Endothelial cell of umbilical vein (primary cell): ENCODE measurements at regions of chr2 and their contacts with region 1.

Region 1: DNA sequence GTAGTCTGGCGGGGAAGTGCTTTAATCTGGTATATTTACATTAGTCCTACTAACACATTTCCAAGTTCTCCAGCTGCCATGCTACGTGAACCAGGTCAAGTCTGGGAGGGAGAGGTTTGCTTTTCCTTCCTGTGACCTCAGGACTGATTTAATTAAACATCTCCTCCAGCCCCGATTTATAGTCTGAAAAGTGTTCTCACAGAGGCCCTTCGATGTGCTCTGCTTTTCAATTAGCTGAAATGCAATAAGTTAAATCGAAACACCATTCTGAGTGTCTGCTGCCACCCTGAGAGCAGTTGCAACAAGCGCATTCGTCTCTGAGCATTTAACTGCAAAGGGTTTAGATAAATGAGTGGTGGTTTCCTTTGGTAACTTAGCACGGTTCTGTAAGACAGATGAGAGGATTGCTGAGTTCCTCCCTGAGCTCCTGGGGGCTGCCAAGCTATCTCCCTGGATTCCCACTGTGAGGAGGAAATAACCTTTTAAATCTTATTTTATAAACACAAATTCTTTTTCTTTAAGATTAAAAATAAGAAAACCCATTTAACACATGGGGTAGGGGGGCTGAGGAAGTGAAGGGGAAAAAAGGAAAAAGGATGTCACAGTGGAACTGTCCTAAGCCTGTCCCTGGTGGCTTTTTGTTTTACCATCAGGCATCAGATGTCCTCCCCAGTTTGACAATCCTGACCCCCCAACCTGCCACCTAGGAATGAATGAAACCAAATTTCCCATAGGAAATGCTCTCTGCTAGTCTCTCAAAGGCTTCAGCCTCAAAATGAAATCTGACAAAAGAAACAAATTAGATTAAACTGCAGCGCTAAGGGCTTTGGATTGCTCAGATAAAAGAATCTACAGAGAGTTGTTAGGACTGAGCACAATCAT is 56.5 kb upstream of the CREB1 start:
- DNase-seq: peak; percentile 90
- H3K4me3 ChIP-seq: peak overlapping the region in 1 of 3 experiments; percentile 40
- H3K27ac ChIP-seq: peak overlapping the region; percentile 58
- H3K4me1 ChIP-seq: peaks cover 9% of the 10 kb centered on the region
- H3K27me3 ChIP-seq: no peaks in the 10 kb centered on the region
- CTCF ChIP-seq: peak; percentile 72 to 81
- POLR2A ChIP-seq: no peak

Region 2: GRCh38 chr2:206556357-206556949 is 916.8 kb before region 1 on chr2:
- CTCF ChIA-PET with region 1: no interaction called
- POLR2A ChIA-PET with region 1: no interaction called
- dilution Hi-C with region 1: no loop called
- intact Hi-C with region 1: loop called (anchors 10 kb)
- DNase-seq: peak; percentile 72
- H3K4me3 ChIP-seq: no peak overlapping the region
- H3K27ac ChIP-seq: no peak overlapping the region
- H3K4me1 ChIP-seq: no peaks in the 10 kb centered on the region
- H3K27me3 ChIP-seq: no peaks in the 10 kb centered on the region
- CTCF ChIP-seq: peak; percentile 30 to 39
- POLR2A ChIP-seq: no peak

Region 3: DNA sequence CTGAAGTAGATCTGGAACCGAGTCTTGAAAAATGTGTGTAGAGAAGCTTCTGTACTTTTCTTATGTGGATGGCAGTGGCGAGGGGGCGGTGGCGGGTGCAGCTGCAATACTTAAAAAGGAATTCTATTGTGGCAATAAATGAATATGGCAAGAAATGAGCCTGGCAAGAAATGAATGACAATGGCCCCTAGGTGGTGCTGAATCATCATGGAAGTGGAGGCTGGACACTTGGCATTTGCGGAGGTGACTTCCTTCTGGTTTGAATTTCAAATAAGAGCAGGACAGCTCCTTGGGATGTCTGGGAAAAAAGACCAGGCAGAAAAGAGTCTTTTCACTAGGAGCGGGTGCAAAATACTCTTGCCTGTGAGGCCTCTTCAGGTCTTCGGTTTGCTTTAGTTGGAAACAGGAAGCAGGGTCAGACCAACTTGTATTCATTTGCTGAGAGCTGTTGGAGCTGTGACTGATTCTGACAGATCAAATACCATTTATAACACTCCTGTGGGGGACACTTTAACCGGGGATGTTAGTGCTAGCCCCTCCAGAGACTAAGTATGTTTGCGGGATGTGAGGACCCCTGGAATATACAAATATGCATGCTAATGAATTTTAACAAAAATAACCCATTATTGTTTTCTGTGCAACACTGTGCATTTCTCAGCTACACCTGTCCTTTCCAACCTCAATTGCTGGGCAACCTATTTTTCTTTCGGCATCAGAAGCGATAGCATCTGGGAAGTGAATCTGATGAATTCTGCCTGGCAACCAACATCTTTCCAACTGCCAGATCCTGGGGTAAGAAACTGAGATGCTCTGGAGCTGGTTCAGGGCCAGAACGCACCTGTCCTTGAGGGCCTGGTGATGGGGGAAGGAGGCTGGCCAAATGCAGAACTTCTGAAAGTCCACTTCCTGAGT is 672.5 kb before region 1 on chr2:
- CTCF ChIA-PET with region 1: interaction called, 59 read pairs
- POLR2A ChIA-PET with region 1: no interaction called
- dilution Hi-C with region 1: no loop called
- intact Hi-C with region 1: loop called (anchors 1 kb)
- DNase-seq: peak; percentile 82
- H3K4me3 ChIP-seq: no peak overlapping the region
- H3K27ac ChIP-seq: no peak overlapping the region
- H3K4me1 ChIP-seq: peaks cover 14% of the 10 kb centered on the region
- H3K27me3 ChIP-seq: no peaks in the 10 kb centered on the region
- CTCF ChIP-seq: peak; percentile 55 to 68
- POLR2A ChIP-seq: no peak

Region 4: GRCh38 chr2:206989306-206989705 is 484.0 kb before region 1 on chr2:
- CTCF ChIA-PET with region 1: interaction called, 76 read pairs
- POLR2A ChIA-PET with region 1: no interaction called
- dilution Hi-C with region 1: no loop called
- intact Hi-C with region 1: no loop called
- DNase-seq: peak; percentile 19
- H3K4me3 ChIP-seq: no peak overlapping the region
- H3K27ac ChIP-seq: no peak overlapping the region
- H3K4me1 ChIP-seq: no peaks in the 10 kb centered on the region
- H3K27me3 ChIP-seq: no peaks in the 10 kb centered on the region
- CTCF ChIP-seq: peak; percentile 66 to 90
- POLR2A ChIP-seq: no peak

Region 5: DNA sequence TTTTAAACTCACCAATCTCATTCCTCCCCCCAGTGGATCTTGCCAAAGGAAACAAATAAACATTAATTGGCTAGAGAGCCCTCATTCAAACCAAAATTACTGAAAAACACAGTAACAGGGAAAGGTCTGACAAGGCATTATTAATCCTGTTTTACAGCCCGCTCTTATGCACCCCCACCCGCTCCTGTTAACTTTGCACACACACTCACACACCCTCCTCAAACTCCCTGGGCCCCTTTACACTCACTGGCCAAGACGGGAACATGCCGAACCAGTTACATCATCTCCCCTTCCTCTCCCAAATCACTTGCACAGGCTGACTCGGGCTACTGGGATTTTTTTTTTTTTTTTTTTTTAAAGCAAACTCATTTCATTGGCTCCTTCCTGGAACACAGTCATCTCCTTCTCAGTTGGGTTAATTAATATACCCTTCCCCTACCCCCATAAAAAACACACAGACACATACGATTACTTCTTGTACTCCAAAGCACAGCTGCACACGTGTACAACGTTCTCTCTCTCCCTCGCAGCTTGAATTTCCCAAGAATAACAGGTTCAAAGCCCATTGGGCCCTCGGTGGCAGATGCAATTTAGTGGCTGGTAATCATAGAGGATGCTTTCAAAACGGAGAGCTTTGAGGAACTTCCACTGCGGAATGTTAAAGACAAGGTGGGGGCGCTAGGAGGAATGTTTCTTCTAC is 339.3 kb before region 1 on chr2:
- CTCF ChIA-PET with region 1: interaction called, 3 read pairs
- POLR2A ChIA-PET with region 1: no interaction called
- dilution Hi-C with region 1: no loop called
- intact Hi-C with region 1: loop called (anchors 1 kb)
- DNase-seq: peak; percentile 86
- H3K4me3 ChIP-seq: peak overlapping the region in 1 of 3 experiments; percentile 42
- H3K27ac ChIP-seq: peak overlapping the region; percentile 94
- H3K4me1 ChIP-seq: peaks cover 83% of the 10 kb centered on the region
- H3K27me3 ChIP-seq: no peaks in the 10 kb centered on the region
- CTCF ChIP-seq: no peak
- POLR2A ChIP-seq: peak; percentile 42

Region 6: DNA sequence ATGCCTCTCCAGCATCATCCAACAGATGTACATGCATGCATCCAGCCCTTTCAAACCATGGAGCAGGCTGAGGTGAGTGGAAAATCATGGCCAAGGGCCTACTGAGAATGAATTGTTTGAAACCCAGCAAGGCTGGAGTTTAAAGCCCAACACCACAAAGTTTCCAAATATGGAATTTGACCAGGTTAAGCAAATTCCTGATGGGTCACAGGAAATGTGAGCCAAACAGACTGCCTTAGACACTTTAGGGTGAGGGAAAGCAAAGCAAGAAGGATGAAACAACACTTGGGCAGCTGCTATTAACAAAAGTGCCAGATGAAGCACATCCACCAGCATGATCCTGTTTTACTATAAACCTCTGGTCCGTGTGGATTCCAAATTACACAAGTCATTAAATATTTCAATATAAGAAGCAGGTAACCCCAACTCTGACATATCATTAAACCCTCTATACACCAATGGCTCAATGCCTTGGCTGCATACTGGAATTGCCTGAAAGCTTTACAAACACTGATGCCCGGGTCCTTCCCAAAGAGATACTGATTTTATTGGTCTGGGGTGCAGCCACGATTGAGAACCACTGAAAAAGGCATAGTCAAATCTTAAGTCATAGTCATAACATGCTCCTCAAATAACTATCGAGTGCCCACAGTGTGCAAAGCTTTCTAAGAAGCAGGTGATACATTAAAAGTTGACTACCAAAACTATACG is 316.7 kb before region 1 on chr2:
- CTCF ChIA-PET with region 1: interaction called, 11 read pairs
- POLR2A ChIA-PET with region 1: no interaction called
- dilution Hi-C with region 1: no loop called
- intact Hi-C with region 1: no loop called
- DNase-seq: no peak
- H3K4me3 ChIP-seq: no peak overlapping the region
- H3K27ac ChIP-seq: no peak overlapping the region
- H3K4me1 ChIP-seq: peaks cover 98% of the 10 kb centered on the region
- H3K27me3 ChIP-seq: no peaks in the 10 kb centered on the region
- CTCF ChIP-seq: no peak
- POLR2A ChIP-seq: no peak

Region 7: DNA sequence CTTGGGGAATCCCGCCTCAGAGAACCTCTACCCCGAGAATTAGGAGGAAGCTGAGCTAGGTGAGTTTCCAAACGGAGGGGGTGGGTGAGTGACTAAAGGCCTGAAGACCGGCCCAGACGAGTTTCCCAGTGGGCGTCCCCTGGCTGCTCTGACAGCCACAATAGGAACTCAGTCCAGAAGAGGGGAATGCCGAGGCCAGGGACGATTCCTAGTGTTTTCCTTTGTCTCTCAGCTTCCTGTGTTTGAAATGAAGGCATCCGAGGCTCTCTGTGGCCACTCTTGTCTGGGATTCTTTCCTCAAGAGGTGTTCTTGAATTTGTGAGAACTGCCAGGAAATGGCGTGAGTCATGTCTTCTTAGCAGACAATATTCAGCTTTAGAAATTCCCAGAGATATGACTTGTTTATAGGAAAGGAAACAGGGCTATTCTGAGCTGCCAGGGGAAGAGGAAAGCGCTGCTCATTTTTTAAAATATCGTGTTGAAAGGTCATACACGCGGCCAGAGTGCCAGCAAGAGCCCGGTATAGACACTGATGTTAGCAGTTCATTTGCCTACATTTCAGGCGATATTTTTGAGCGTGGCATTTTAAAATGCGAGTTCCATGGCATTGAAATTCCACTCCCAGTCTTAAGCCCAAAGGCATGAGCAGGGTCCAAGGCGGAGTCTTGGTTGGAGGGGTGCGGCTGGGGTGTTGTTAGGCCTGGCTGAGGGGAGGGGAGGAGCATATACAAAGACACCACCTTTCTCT is 138.5 kb before region 1 on chr2:
- CTCF ChIA-PET with region 1: interaction called, 9 read pairs
- POLR2A ChIA-PET with region 1: no interaction called
- dilution Hi-C with region 1: no loop called
- intact Hi-C with region 1: loop called (anchors 1 kb)
- DNase-seq: peak; percentile 99
- H3K4me3 ChIP-seq: peak overlapping the region in 1 of 3 experiments; percentile 60
- H3K27ac ChIP-seq: peak overlapping the region; percentile 99
- H3K4me1 ChIP-seq: peaks cover 53% of the 10 kb centered on the region
- H3K27me3 ChIP-seq: no peaks in the 10 kb centered on the region
- CTCF ChIP-seq: no peak
- POLR2A ChIP-seq: peak; percentile 24

Region 8: DNA sequence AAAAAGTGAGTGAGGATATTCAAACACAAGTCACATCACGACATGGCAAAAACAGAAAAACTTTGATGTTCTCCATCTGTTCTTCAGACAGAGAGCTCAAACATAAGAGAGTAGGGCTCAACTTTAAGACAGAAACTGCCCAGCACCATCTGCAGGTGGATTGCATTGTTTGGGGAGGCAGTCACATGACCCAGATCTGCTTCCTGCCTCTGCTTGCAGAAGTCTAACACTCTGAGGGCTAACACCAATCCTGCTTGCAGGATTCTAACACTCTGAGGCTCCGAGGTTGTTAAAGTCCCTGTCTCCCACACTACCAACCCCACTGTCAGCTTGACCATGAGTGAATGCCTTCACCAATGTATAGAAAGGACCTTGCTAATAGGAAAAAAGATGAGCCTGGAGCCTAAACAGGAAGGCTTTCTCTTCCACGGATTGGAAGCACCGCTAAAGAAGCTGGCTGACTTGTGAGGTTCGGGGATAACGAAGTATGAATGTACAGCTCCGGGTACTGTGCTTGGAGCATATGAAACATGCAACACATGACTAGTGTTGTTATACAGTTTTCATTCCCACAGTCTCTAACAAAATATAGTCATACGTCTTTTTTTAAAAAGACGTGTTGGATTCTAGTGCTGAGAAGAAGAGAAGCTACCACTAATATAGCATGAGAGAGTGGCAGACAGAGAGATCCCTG is 120.2 kb before region 1 on chr2:
- CTCF ChIA-PET with region 1: no interaction called
- POLR2A ChIA-PET with region 1: no interaction called
- dilution Hi-C with region 1: no loop called
- intact Hi-C with region 1: no loop called
- DNase-seq: no peak
- H3K4me3 ChIP-seq: no peak overlapping the region
- H3K27ac ChIP-seq: no peak overlapping the region
- H3K4me1 ChIP-seq: no peaks in the 10 kb centered on the region
- H3K27me3 ChIP-seq: no peaks in the 10 kb centered on the region
- CTCF ChIP-seq: no peak
- POLR2A ChIP-seq: no peak

Region 9: DNA sequence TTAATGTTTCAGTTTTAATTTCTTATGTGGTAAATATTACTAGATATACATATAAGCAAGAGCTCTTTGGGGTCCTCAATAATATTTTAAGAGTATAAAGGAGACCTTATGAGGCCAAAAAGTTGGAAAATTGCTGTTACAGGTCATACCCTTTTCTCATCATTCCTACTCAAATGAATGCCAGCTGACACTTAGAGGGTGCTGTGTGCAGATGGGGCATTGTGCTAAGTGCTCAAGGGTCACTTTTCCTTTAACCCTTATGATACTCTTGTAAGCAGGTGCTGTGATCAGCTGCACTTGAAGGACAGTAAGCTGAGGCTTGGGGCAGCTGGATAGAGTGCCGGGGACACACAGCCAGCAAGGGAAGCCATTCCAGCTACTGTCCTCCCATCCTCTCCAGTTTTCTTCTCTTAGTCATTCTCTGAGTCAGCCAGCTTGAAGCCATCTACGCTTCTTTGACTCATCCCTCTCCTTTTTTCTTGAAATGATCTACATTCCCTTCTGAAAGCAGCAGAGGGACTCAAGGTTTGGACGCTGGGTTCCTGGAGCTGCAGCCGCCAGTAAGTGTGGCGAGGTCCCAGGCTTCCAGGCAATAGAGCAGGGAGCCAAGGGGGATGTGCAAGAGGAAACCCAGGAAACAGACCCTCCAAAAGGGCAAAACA is 14.5 kb after region 1 on chr2:
- CTCF ChIA-PET with region 1: no interaction called
- POLR2A ChIA-PET with region 1: no interaction called
- dilution Hi-C with region 1: no loop called
- intact Hi-C with region 1: no loop called
- DNase-seq: no peak
- H3K4me3 ChIP-seq: no peak overlapping the region
- H3K27ac ChIP-seq: no peak overlapping the region
- H3K4me1 ChIP-seq: no peaks in the 10 kb centered on the region
- H3K27me3 ChIP-seq: no peaks in the 10 kb centered on the region
- CTCF ChIP-seq: no peak
- POLR2A ChIP-seq: no peak

Region 10: GRCh38 chr2:207734264-207734635 is 261.0 kb after region 1 on chr2:
- CTCF ChIA-PET with region 1: no interaction called
- POLR2A ChIA-PET with region 1: no interaction called
- dilution Hi-C with region 1: no loop called
- intact Hi-C with region 1: no loop called
- DNase-seq: peak; percentile 54
- H3K4me3 ChIP-seq: no peak overlapping the region
- H3K27ac ChIP-seq: no peak overlapping the region
- H3K4me1 ChIP-seq: no peaks in the 10 kb centered on the region
- H3K27me3 ChIP-seq: no peaks in the 10 kb centered on the region
- CTCF ChIP-seq: peak; percentile 15 to 57
- POLR2A ChIP-seq: no peak